ENCODE measurements at regions of chr5 and their contacts with region 1.

Region 1: DNA sequence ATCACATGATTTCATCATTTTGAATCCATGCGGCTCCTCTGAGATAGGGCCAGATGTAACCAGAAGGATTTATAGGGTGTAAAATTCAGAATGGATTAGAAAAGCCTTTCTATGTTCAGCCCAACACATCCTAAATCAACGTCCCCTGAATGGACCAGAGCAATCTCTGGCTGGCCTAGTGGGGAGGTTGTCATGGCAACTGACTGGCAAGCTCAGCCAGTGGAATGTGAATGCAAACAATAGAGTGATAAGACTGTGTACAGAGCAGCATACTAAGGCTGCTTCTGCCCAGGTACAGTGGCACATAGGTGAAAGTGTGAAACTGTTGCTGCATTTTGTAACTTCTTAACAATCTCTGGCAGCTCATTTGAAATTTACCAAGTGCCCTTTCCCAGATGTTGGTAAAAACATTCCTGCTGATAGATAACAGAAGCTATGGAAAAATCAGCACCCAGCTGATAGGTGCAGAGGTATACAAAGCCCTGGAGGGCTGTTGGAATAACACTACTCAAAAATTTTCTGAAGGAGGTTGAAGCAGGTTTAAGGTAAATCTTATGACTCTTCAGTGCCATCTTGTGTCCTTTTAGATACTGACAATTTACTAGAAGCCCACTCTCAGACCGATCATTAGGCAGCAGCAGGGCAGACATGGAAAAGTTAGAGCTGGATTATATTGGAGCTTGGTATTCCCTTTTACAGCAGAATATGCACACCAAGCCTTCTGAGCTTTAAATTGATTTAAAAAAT is 267.2 kb downstream of the RAB3C start:
- DNase-seq: no peak
- ATAC-seq: no peak
- H3K4me3 ChIP-seq: no peak overlapping the region
- H3K27ac ChIP-seq: no peak overlapping the region
- H3K4me1 ChIP-seq: no peaks in the 10 kb centered on the region
- H3K27me3 ChIP-seq: no peaks in the 10 kb centered on the region

Region 2: DNA sequence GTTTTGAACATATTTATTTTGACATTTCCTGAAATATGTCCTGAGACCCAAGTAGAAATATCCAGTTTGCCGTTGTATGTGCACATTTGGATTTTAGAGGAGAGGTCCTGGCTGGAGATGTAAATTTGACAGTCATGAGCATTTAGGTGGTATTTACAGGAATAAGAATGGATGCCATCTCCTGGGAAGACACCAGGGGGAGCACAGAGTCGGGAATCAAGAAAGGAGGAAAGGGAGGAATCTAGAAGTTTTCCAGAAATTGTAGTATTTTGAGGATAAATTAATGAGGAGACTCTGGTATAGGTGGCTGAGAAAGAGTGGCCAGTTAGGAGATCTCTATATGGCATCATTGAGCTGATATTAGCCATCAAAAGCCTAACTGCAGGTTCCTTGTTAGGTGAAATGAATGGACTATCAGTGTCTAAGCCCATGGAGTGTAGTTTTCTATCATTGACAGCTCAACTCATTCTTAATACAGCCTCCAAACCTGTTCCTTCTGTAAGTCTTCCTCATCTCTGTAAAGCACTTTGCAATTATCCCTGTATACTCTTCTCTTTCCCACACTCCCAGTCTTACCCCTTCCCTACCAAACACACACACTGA is 351.7 kb before region 1 on chr5:
- intact Hi-C with region 1: loop called (anchors 2 to 5 kb)
- DNase-seq: no peak
- ATAC-seq: no peak
- H3K4me3 ChIP-seq: no peak overlapping the region
- H3K27ac ChIP-seq: no peak overlapping the region
- H3K4me1 ChIP-seq: no peaks in the 10 kb centered on the region
- H3K27me3 ChIP-seq: no peaks in the 10 kb centered on the region